Naive thymus-derived CD4-positive, alpha-beta T cell (primary cell): ENCODE measurements at regions of chr7 and their contacts with region 1.

Region 1: DNA sequence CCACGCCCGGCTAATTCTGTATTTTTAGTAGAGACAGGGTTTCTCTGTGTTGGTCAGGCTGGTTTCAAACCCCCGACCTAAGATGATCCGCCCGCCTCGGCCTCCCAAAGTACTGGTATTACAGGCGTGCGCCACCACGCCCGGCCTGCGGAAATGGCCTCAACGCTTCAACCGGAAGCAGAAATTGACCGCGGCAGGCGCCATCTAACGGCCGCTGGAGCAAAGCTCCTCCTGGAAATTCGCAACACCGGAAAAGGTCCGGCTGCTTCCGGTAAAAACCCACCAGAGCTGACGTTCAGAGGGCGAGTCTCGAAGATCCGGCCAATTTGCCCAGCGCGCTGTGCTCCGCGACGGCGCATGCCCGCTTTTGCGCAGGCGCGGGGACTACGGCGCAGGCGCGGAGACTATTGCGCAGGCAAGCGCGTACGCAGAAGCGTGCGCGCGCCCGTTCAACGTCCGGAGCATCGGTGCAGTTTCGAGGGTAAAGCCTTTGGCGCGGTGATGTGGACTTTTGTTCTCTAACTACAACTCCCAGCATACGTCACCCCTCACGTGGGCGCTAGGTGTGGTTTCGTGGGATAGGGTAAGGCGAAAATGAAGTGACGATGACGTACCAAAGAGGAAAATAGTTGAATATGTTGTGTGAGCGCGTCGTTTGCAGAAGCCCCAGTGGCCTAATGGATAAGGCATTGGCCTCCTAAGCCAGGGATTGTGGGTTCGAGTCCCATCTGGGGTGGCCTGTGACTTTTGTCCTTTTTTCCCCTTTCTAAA is 915 bp upstream of the FMC1 start:
- DNase-seq: peak; percentile 93 to 100 (median 99)
- ATAC-seq: peak; percentile 89
- H3K4me3 ChIP-seq: peak overlapping the region; percentile 95
- H3K4me3 Mint-ChIP-seq: peak overlapping the region; percentile 93 to 100 (median 98)
- H3K27ac ChIP-seq: peak overlapping the region; percentile 100
- H3K27ac Mint-ChIP-seq: peak overlapping the region; percentile 98 to 100 (median 100)
- H3K4me1 ChIP-seq: peaks cover 11 to 13% of the 10 kb centered on the region in 2 donors
- H3K4me1 Mint-ChIP-seq: peaks cover 12 to 49% (median 38%) of the 10 kb centered on the region in 7 donors
- H3K27me3 ChIP-seq: no peaks in the 10 kb centered on the region
- H3K27me3 Mint-ChIP-seq: peaks cover 0 to 9% (median 5%) of the 10 kb centered on the region in 5 donors

Region 2: GRCh38 chr7:138898255-138898654 is 442.0 kb before region 1 on chr7:
- CTCF ChIA-PET with region 1: no interaction called
- POLR2A ChIA-PET with region 1: no interaction called
- intact Hi-C with region 1: loop called (anchors 2 to 5 kb)
- DNase-seq: peak in 4 of 9 donors; percentile 14 to 36 (median 18)
- ATAC-seq: peak; percentile 49
- H3K4me3 ChIP-seq: no peak overlapping the region
- H3K4me3 Mint-ChIP-seq: peak overlapping the region in 7 of 10 donors; percentile 12 to 56 (median 27)
- H3K27ac ChIP-seq: no peak overlapping the region
- H3K27ac Mint-ChIP-seq: peak overlapping the region in 7 of 9 donors; percentile 16 to 75 (median 46)
- H3K4me1 ChIP-seq: peaks cover 9 to 26% of the 10 kb centered on the region in 2 donors
- H3K4me1 Mint-ChIP-seq: peaks cover 20 to 53% (median 48%) of the 10 kb centered on the region in 7 donors
- H3K27me3 ChIP-seq: no peaks in the 10 kb centered on the region
- H3K27me3 Mint-ChIP-seq: peaks cover 0 to 66% (median 0%) of the 10 kb centered on the region in 5 donors

Region 3: DNA sequence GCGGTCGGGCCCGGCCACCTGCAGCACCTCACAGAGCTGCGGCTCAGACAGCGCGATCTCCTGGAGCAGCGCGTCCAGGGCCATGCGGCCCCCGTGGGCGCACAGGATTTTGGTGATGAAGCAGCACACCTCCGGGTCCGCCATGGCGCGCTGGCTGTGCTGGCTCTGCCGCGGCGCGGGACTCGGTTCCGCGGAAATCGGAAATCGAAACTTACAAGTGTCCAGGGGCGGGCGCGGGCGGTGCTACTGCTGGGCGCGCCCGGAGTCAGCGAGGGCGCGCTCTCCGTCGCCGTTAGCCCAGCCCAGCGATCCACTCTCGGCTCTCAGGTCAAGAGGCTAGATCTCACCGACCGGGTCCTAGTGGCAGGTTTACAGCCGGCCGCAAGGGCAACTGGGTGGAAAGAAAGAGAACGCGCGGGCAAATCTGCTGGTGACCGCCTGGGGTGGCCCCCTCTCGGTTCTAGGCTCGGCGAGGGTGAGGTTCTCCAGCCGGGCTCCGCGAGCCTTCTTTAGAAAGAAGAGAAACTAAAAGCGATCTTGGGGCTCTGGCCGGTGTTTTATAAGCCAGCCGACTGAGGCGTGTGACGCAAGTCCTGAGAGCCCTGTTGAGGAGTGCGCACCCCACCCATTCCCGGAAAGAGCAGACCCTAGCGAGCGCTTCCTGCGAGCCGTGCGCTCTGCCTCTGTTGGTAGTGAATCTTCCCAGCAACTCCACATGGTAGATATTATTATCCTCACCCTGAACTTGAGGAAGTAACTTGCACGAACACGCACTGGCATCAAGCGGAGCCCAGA is 230.8 kb before region 1 on chr7 and contains the start of gene ZC3HAV1:
- CTCF ChIA-PET with region 1: no interaction called
- POLR2A ChIA-PET with region 1: no interaction called
- intact Hi-C with region 1: loop called (anchors 1 kb)
- DNase-seq: peak; percentile 68 to 94 (median 90)
- ATAC-seq: peak; percentile 91
- H3K4me3 ChIP-seq: peak within 1 kb of the TSS; percentile 80
- H3K4me3 Mint-ChIP-seq: peak within 1 kb of the TSS; percentile 92 to 100 (median 98)
- H3K27ac ChIP-seq: peak within 1 kb of the TSS; percentile 93
- H3K27ac Mint-ChIP-seq: peak within 1 kb of the TSS; percentile 96 to 100 (median 98)
- H3K4me1 ChIP-seq: peaks cover 13 to 22% of the 10 kb centered on the region in 2 donors
- H3K4me1 Mint-ChIP-seq: peaks cover 24 to 49% (median 42%) of the 10 kb centered on the region in 7 donors
- H3K27me3 ChIP-seq: no peaks in the 10 kb centered on the region
- H3K27me3 Mint-ChIP-seq: no peaks in the 10 kb centered on the region
- total RNA-seq, gene ZC3HAV1: 129 to 181 (median 152) TPM

Region 4: GRCh38 chr7:139359366-139360209 is 19.4 kb after region 1 on chr7 and contains the start of gene LUC7L2:
- CTCF ChIA-PET with region 1: interaction called, 3 read pairs
- POLR2A ChIA-PET with region 1: interaction called, 68 read pairs
- intact Hi-C with region 1: loop called (anchors 1 kb)
- DNase-seq: peak; percentile 96 to 100 (median 99)
- ATAC-seq: peak; percentile 91
- H3K4me3 ChIP-seq: peak within 1 kb of the TSS; percentile 80
- H3K4me3 Mint-ChIP-seq: peak within 1 kb of the TSS; percentile 93 to 100 (median 99)
- H3K27ac ChIP-seq: peak within 1 kb of the TSS; percentile 97
- H3K27ac Mint-ChIP-seq: peak within 1 kb of the TSS; percentile 95 to 100 (median 98)
- H3K4me1 ChIP-seq: peaks cover 10 to 27% of the 10 kb centered on the region in 2 donors
- H3K4me1 Mint-ChIP-seq: peaks cover 21 to 60% (median 45%) of the 10 kb centered on the region in 7 donors
- H3K27me3 ChIP-seq: no peaks in the 10 kb centered on the region
- H3K27me3 Mint-ChIP-seq: no peaks in the 10 kb centered on the region
- total RNA-seq, gene LUC7L2: 116 to 183 (median 150) TPM

Region 5: GRCh38 chr7:139620676-139621344 is 280.6 kb after region 1 on chr7:
- CTCF ChIA-PET with region 1: no interaction called
- POLR2A ChIA-PET with region 1: no interaction called
- intact Hi-C with region 1: loop called in 1 of 2 experiments (anchors 10 kb)
- DNase-seq: peak in 8 of 9 donors; percentile 27 to 58 (median 54)
- ATAC-seq: peak; percentile 86
- H3K4me3 ChIP-seq: no peak overlapping the region
- H3K4me3 Mint-ChIP-seq: peak overlapping the region in 1 of 10 donors; percentile 10
- H3K27ac ChIP-seq: no peak overlapping the region
- H3K27ac Mint-ChIP-seq: peak overlapping the region in 6 of 9 donors; percentile 0 to 82 (median 42)
- H3K4me1 ChIP-seq: peaks cover 0 to 8% of the 10 kb centered on the region in 2 donors
- H3K4me1 Mint-ChIP-seq: peaks cover 16 to 47% (median 36%) of the 10 kb centered on the region in 7 donors
- H3K27me3 ChIP-seq: no peaks in the 10 kb centered on the region
- H3K27me3 Mint-ChIP-seq: no peaks in the 10 kb centered on the region

Region 6: GRCh38 chr7:140230861-140231770 is 890.9 kb after region 1 on chr7:
- CTCF ChIA-PET with region 1: no interaction called
- POLR2A ChIA-PET with region 1: no interaction called
- intact Hi-C with region 1: loop called in 1 of 2 experiments (anchors 1 kb)
- DNase-seq: peak; percentile 13 to 73 (median 44)
- ATAC-seq: peak; percentile 30
- H3K4me3 ChIP-seq: peak overlapping the region; percentile 95
- H3K4me3 Mint-ChIP-seq: peak overlapping the region; percentile 84 to 99 (median 96)
- H3K27ac ChIP-seq: peak overlapping the region; percentile 91
- H3K27ac Mint-ChIP-seq: peak overlapping the region; percentile 95 to 100 (median 99)
- H3K4me1 ChIP-seq: peaks cover 16 to 21% of the 10 kb centered on the region in 2 donors
- H3K4me1 Mint-ChIP-seq: peaks cover 24 to 56% (median 51%) of the 10 kb centered on the region in 7 donors
- H3K27me3 ChIP-seq: no peaks in the 10 kb centered on the region
- H3K27me3 Mint-ChIP-seq: peaks cover 0 to 2% (median 0%) of the 10 kb centered on the region in 5 donors